ENCODE measurements at regions of chr2 and their contacts with region 1.

Region 1: GRCh38 chr2:218269899-218270720 is at the starts of genes AAMP and PNKD:
- DNase-seq: peak; percentile 100
- H3K4me3 ChIP-seq: peak within 1 kb of the TSS; percentile 97 to 98 (median 97)
- H3K27ac ChIP-seq: peak within 1 kb of the TSS; percentile 76 to 89
- H3K4me1 ChIP-seq: peaks cover 0 to 29% (median 8%) of the 10 kb centered on the region in 3 donors
- H3K27me3 ChIP-seq: no peaks in the 10 kb centered on the region
- CTCF ChIP-seq: peak; percentile 15
- total RNA-seq, gene AAMP: 70.1 TPM
- total RNA-seq, gene PNKD: 90.6 TPM

Region 2: GRCh38 chr2:218406209-218406948 is 136.3 kb after region 1 on chr2:
- intact Hi-C with region 1: no loop called
- DNase-seq: peak; percentile 97 to 100 (median 98)
- H3K4me3 ChIP-seq: peak overlapping the region; percentile 49 to 64 (median 59)
- H3K27ac ChIP-seq: peak overlapping the region; percentile 86 to 91
- H3K4me1 ChIP-seq: peaks cover 2 to 27% (median 16%) of the 10 kb centered on the region in 3 donors
- H3K27me3 ChIP-seq: no peaks in the 10 kb centered on the region
- CTCF ChIP-seq: peak; percentile 84

Region 3: DNA sequence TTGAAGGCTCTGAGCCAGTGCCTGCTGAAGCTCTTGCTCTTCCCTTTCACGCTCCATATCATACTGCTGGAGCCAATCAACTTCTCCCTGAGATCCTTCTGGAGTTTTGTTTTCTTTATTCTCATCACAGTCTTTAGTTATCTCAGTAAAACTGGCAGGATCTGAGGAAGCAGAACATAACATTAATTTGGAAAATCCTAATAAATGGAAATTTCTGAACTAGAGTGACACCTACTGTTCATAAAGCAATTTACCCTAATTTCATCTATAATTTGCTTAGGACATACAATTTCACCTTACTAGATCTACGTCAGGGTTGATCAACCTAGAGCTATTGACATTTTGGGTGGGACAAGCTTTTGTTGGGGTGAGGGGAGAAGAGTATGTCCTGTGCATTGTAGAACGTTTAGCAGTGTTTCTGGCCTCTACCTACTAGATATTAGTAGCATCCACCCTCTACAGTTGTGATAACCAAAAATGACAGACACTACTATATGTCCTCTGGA is 196.0 kb after region 1 on chr2:
- intact Hi-C with region 1: loop called (anchors 10 kb)
- DNase-seq: peak in 2 of 5 donors; percentile 31 to 52
- H3K4me3 ChIP-seq: no peak overlapping the region
- H3K27ac ChIP-seq: no peak overlapping the region
- H3K4me1 ChIP-seq: no peaks in the 10 kb centered on the region
- H3K27me3 ChIP-seq: no peaks in the 10 kb centered on the region
- CTCF ChIP-seq: peak; percentile 48